Heart right ventricle (tissue), 16 donors: ENCODE measurements at regions of chr13 and their contacts with region 1.

Region 1: GRCh38 chr13:66723591-66723990 is 506.5 kb downstream of the PCDH9 start:
- DNase-seq: no peak
- ATAC-seq: no peak
- H3K4me3 ChIP-seq: no peak overlapping the region
- H3K27ac ChIP-seq: no peak overlapping the region
- H3K4me1 ChIP-seq: no peaks in the 10 kb centered on the region
- H3K27me3 ChIP-seq: no peaks in the 10 kb centered on the region
- CTCF ChIP-seq: no peak

Region 2: DNA sequence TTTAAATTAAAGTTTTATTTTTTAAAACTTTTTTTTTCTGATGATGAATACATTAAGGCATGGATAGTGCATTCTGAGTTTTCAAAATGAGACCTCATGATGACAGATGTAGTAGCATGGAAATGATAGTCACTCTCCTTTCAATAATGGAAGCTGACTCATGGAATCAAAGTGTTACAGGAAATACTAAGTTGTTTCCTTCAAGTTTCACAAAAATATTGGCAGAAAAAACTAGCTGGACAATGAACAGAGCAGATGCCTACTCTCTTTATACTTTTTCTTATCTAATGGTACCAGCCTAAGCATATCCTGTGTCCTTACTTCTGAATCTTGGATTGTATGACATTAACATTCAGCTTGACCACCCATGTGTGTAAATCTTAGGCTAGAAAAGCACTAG is 830.7 kb before region 1 on chr13:
- intact Hi-C with region 1: no loop called
- DNase-seq: no peak
- ATAC-seq: no peak
- H3K4me3 ChIP-seq: no peak overlapping the region
- H3K27ac ChIP-seq: no peak overlapping the region
- H3K4me1 ChIP-seq: no peaks in the 10 kb centered on the region
- H3K27me3 ChIP-seq: no peaks in the 10 kb centered on the region
- CTCF ChIP-seq: no peak

Region 3: DNA sequence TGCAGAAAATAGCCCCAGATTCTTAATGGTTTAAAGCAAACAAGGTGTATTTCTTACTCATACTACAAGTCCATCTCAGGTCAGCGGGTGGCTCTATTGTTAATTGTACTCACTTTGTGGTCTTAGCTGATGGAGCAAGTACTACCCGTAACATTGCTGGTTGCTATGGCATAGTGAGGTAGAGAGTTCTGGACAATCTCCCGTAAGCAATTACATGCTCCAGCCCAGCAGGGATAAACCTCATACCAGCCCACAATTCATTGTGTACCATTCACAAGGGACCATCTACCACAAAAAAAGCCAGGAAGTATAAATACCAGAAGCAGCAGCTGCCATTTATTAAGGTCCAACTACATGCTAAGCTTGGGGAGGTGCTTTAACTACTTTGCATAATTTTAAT is 339.4 kb after region 1 on chr13:
- intact Hi-C with region 1: loop called in 1 of 10 experiments (anchors 5 kb)
- DNase-seq: no peak
- ATAC-seq: no peak
- H3K4me3 ChIP-seq: no peak overlapping the region
- H3K27ac ChIP-seq: no peak overlapping the region
- H3K4me1 ChIP-seq: peaks cover 0 to 13% (median 2%) of the 10 kb centered on the region in 9 donors
- H3K27me3 ChIP-seq: no peaks in the 10 kb centered on the region
- CTCF ChIP-seq: no peak